HCT116 (cell line): ENCODE measurements at regions of chr5 and their contacts with region 1.

Region 1: GRCh38 chr5:116566251-116566650 is 8.4 kb downstream of the SEMA6A start:
- DNase-seq: no peak
- ATAC-seq: no peak
- H3K4me3 ChIP-seq: no peak overlapping the region
- H3K27ac ChIP-seq: no peak overlapping the region
- H3K4me1 ChIP-seq: no peaks in the 10 kb centered on the region
- H3K27me3 ChIP-seq: no peaks in the 10 kb centered on the region
- CTCF ChIP-seq: no peak
- POLR2A ChIP-seq: no peak
- RAD21 ChIP-seq: no peak

Region 2: GRCh38 chr5:116502651-116503095 is 63.6 kb before region 1 on chr5:
- CTCF ChIA-PET with region 1: no interaction called
- POLR2A ChIA-PET with region 1: no interaction called
- RAD21 ChIA-PET with region 1: no interaction called
- intact Hi-C with region 1: loop called (anchors 10 kb)
- DNase-seq: no peak
- ATAC-seq: no peak
- H3K4me3 ChIP-seq: no peak overlapping the region
- H3K27ac ChIP-seq: no peak overlapping the region
- H3K4me1 ChIP-seq: peaks cover 0 to 12% of the 10 kb centered on the region in 2 experiments; a peak in 1 of 4 replicates
- H3K27me3 ChIP-seq: no peaks in the 10 kb centered on the region
- CTCF ChIP-seq: no peak
- POLR2A ChIP-seq: no peak
- RAD21 ChIP-seq: no peak